Endothelial cell of umbilical vein (primary cell): ENCODE measurements at regions of chr9 and their contacts with region 1.

Region 1: DNA sequence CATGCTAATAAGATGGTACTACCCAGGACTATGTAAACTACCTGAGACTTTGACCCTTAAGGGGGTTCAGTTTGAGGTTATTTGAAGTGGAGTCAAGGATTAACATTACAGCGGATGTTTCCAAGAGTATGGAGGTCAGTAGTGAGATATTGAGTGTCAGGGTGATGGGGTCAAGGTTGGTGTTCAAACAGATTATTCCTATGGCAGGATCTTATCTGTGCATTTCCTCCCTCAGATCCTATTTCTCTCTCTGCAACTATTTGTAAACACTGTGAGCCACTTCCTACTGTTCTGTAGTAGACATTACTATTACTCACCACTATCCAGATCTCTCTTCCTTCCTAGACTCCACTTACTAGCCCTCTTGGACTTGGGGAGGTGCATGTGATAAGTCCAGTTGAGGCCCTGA is 54.0 kb upstream of the STOM start:
- DNase-seq: no peak
- H3K4me3 ChIP-seq: no peak overlapping the region
- H3K27ac ChIP-seq: no peak overlapping the region
- H3K4me1 ChIP-seq: no peaks in the 10 kb centered on the region
- H3K27me3 ChIP-seq: peaks cover 3 to 23% of the 10 kb centered on the region in 2 experiments
- CTCF ChIP-seq: no peak
- POLR2A ChIP-seq: no peak

Region 2: DNA sequence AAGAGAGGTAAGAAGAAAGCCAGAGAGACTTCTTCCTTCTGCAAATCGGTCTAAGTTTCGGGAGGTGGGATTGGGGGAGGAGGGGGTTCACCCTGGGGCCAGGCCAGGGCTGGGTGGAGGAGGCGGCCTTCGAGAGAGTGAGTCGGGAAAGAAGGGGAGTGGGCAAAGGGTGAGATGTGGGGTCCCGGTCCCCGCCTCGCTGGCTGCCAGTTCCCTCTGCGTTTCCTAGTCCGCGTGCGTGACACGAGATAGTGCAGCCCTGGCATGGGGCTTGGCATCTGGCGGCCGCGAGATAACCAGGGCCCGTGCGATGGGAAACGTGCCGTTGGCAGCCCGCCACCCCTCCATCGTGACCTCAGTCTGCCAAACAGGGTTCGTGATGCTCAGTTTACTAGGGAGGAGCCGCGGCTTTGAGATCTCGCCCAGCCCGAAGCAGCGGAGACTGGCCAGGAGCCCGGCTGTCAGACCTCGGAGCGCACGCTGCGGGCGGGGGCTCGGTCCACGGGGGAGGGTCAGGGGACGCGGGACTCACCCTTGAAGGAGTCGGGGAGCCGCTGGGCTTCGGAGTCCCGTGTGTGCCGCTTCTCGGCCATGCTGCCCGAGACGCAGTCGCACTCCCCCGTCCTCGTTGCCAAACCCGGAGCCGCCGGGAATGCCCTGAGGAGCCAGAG is 54.3 kb before region 1 on chr9 and contains the start of gene STOM:
- CTCF ChIA-PET with region 1: no interaction called
- POLR2A ChIA-PET with region 1: no interaction called
- dilution Hi-C with region 1: no loop called
- intact Hi-C with region 1: no loop called
- DNase-seq: peak; percentile 89
- H3K4me3 ChIP-seq: peak within 1 kb of the TSS; percentile 66 to 88 (median 78)
- H3K27ac ChIP-seq: peak within 1 kb of the TSS; percentile 93
- H3K4me1 ChIP-seq: peaks cover 43% of the 10 kb centered on the region
- H3K27me3 ChIP-seq: no peaks in the 10 kb centered on the region
- CTCF ChIP-seq: no peak
- POLR2A ChIP-seq: peak; percentile 98
- total RNA-seq, gene STOM: 138 and 170 TPM in 2 replicates

Region 3: GRCh38 chr9:121405899-121406298 is 18.1 kb before region 1 on chr9:
- CTCF ChIA-PET with region 1: interaction called, 3 read pairs
- POLR2A ChIA-PET with region 1: interaction called, 11 read pairs
- dilution Hi-C with region 1: no loop called
- intact Hi-C with region 1: no loop called
- DNase-seq: no peak
- H3K4me3 ChIP-seq: no peak overlapping the region
- H3K27ac ChIP-seq: no peak overlapping the region
- H3K4me1 ChIP-seq: no peaks in the 10 kb centered on the region
- H3K27me3 ChIP-seq: peaks cover 0 to 7% of the 10 kb centered on the region in 2 experiments
- CTCF ChIP-seq: no peak
- POLR2A ChIP-seq: no peak

Region 4: GRCh38 chr9:121529237-121529987 is 105.4 kb after region 1 on chr9:
- CTCF ChIA-PET with region 1: no interaction called
- POLR2A ChIA-PET with region 1: no interaction called
- dilution Hi-C with region 1: no loop called
- intact Hi-C with region 1: no loop called
- DNase-seq: peak; percentile 98
- H3K4me3 ChIP-seq: no peak overlapping the region
- H3K27ac ChIP-seq: peak overlapping the region; percentile 40
- H3K4me1 ChIP-seq: no peaks in the 10 kb centered on the region
- H3K27me3 ChIP-seq: peaks cover 2 to 3% of the 10 kb centered on the region in 2 experiments
- CTCF ChIP-seq: no peak
- POLR2A ChIP-seq: no peak